Caco-2 (cell line): ENCODE measurements at regions of chr3 and their contacts with region 1.

Region 1: DNA sequence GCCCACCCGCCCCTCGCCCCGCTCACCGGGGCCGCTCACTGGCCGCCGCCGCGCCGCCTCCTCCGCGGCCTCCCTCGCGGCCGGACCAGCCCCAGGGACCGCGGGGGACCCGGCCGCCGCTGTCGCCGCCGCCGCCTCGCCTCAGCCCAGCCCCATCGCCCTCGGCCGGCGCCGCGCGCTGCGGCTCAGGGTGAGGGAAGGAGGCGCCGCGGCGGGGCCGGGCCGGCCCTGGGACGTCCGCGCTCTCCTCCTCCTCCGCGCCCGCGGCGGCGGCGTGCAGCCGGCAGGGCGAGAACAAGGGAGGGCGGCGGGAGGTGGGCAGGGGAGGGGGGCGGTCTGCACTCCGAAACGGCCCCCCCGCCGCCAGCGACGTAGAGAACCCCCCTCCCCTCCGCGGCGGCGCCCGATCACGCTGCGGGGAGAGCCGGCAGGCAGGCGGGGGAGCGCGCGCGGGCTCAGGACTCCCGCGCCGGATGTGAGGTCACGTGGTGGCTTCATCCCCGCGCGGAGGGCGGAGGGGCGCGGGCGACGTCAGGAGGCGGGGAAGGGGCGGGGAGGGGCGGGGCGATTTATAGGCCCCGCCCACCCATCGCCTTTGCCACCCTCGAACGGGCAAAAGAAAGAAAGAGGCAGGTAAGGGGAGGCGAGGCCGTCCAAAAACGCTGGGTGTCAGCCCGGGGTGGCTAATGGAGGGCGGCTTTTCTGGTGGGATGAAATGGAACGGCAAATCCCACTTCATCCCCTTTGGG is at the start of gene ATP13A3:
- DNase-seq: peak; percentile 88 to 91
- H3K4me3 ChIP-seq: peak within 1 kb of the TSS; percentile 70
- H3K4me3 Mint-ChIP-seq: peak within 1 kb of the TSS; percentile 70
- H3K27ac Mint-ChIP-seq: peak within 1 kb of the TSS; percentile 77
- H3K4me1 ChIP-seq: peaks cover 37% of the 10 kb centered on the region
- H3K4me1 Mint-ChIP-seq: peaks cover 33% of the 10 kb centered on the region
- H3K27me3 ChIP-seq: no peaks in the 10 kb centered on the region
- H3K27me3 Mint-ChIP-seq: no peaks in the 10 kb centered on the region
- CTCF ChIP-seq: no peak
- total RNA-seq, gene ATP13A3: 181 and 183 TPM in 2 replicates

Region 2: GRCh38 chr3:194512895-194513601 is 26.3 kb after region 1 on chr3:
- CTCF ChIA-PET with region 1: no interaction called
- POLR2A ChIA-PET with region 1: no interaction called
- intact Hi-C with region 1: loop called (anchors 2 kb)
- DNase-seq: peak; percentile 84 to 85
- H3K4me3 ChIP-seq: no peak overlapping the region
- H3K4me3 Mint-ChIP-seq: no peak overlapping the region
- H3K27ac Mint-ChIP-seq: no peak overlapping the region
- H3K4me1 ChIP-seq: peaks cover 32% of the 10 kb centered on the region
- H3K4me1 Mint-ChIP-seq: peaks cover 21% of the 10 kb centered on the region
- H3K27me3 ChIP-seq: no peaks in the 10 kb centered on the region
- H3K27me3 Mint-ChIP-seq: no peaks in the 10 kb centered on the region
- CTCF ChIP-seq: no peak

Region 3: DNA sequence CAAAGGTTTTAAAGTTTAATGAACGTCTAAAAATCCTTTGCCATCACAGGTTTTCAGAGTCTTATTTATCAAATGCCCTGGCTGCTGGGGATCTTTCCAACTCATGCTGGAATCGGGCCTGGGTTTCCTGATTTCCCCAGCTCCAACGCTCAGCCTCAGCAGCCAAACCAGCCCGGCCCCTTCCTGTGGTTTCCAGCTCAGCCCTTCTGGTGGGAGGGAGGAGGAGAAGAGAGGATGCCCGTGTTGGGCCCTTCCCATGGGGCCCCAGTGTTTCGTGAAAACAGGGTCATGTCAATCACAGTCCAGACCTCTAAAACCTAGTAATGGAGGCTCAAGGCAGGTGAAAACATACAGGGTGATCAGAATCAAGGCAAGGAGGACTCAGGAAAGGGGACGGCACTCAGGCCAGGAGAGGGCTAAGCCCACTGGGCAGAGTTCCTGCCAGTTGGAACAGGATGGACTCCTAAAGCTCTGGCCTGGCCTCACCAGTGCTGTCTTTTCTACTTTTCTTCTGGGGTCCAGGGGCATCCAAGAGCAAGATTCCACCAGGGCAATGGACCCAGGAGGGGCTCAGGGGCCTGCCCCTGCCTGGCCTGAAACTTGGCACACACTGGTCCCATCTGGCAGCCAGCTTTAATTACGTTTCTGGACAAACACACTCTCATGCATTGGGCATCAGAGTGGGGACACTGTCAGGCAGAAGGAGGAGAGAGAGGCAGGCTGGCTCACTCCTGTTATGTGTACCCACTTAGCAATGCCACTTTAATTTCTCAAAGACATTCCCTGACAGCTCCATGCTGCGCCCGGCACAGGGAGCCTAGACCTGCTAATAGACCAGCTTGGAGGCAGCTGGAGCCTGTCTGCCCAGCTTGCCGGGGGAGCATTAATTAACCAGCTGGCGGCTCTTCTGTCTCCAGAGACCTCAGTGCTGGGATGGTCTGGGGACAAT is 393.6 kb after region 1 on chr3:
- CTCF ChIA-PET with region 1: no interaction called
- POLR2A ChIA-PET with region 1: no interaction called
- intact Hi-C with region 1: no loop called
- DNase-seq: no peak
- H3K4me3 ChIP-seq: no peak overlapping the region
- H3K4me3 Mint-ChIP-seq: no peak overlapping the region
- H3K27ac Mint-ChIP-seq: no peak overlapping the region
- H3K4me1 ChIP-seq: peaks cover 4% of the 10 kb centered on the region; the same call in 1 of the 2 replicates
- H3K4me1 Mint-ChIP-seq: no peaks in the 10 kb centered on the region
- H3K27me3 ChIP-seq: no peaks in the 10 kb centered on the region
- H3K27me3 Mint-ChIP-seq: no peaks in the 10 kb centered on the region
- CTCF ChIP-seq: no peak

Region 4: DNA sequence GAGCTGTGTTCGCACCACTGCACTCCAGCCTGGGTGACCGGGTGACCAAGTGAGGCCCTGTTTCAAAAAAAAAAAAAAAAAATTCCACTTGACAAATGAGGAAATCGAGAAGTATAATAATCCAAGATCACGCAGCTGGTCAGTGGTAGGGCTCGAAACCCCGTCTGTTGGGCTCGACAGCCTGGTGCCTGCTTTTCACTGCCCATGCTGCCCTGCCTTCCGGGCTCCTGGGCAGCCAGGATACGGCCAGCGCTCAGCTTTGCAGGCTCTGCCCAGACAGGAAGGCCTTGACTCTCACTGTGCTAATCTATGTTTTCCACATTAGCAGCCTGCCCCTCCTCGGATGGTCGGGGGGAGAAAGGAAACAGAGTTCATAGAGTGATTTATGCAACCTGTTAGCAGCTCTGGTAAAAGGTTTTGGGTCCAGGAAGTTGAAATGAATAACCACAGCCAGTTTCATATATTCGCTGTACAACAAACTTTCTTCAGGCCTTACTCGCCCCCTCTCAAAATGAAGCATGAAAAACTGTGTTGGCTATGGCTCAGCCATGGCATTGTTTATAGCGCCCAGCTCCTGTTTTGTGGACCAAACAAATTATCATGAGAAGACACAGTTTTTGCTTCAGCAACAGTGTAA is 675.4 kb after region 1 on chr3:
- CTCF ChIA-PET with region 1: no interaction called
- POLR2A ChIA-PET with region 1: interaction called, 10 read pairs
- intact Hi-C with region 1: no loop called
- DNase-seq: no peak
- H3K4me3 ChIP-seq: no peak overlapping the region
- H3K4me3 Mint-ChIP-seq: no peak overlapping the region
- H3K27ac Mint-ChIP-seq: no peak overlapping the region
- H3K4me1 ChIP-seq: peaks cover 38% of the 10 kb centered on the region
- H3K4me1 Mint-ChIP-seq: peaks cover 48% of the 10 kb centered on the region
- H3K27me3 ChIP-seq: no peaks in the 10 kb centered on the region
- H3K27me3 Mint-ChIP-seq: no peaks in the 10 kb centered on the region
- CTCF ChIP-seq: no peak

Region 5: DNA sequence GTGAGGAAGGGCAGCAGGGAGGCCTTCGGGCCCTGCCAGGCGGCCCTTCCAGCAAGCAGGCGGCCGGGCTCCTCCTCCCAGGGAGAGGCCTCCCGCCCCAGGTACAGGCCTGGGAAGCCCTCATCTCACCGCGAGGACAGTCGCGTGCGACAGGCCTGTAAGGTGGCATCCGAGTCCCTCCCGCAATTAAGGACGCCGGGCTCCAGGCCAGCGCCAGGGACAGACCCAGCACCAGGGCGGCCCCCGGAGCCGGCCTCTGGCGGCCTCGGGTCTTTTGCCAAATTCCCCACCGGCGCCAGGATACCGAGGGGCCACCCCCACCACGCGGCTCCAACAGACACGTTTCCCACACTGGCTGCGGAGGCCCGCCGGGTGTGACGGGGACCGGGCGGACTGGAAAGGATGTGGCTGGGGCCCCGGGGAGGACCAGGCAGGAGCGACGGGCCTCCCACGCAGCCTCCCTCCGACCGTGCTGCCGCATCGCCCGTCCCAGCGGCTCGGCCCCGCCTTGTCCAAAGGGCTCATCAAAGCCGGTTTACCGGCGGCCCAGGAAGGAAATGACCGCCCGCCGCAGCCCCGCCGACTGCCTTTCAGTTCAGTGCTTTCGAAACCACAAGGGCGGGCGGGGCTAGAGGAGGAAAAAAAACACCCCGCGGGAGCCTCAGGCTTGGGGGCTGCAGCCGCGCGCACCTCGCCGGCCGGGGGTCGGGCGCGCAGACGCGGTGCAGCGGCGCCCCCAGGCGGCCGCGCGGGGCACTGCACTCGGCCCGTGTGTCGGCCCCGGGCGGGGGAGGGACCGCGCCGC is 773.0 kb after region 1 on chr3:
- CTCF ChIA-PET with region 1: no interaction called
- POLR2A ChIA-PET with region 1: no interaction called
- intact Hi-C with region 1: no loop called
- DNase-seq: peak; percentile 94
- H3K4me3 ChIP-seq: peak overlapping the region; percentile 83
- H3K4me3 Mint-ChIP-seq: peak overlapping the region; percentile 70
- H3K27ac Mint-ChIP-seq: peak overlapping the region; percentile 69
- H3K4me1 ChIP-seq: peaks cover 9% of the 10 kb centered on the region; the same call in 1 of the 2 replicates
- H3K4me1 Mint-ChIP-seq: peaks cover 6% of the 10 kb centered on the region
- H3K27me3 ChIP-seq: no peaks in the 10 kb centered on the region
- H3K27me3 Mint-ChIP-seq: no peaks in the 10 kb centered on the region
- CTCF ChIP-seq: peak; percentile 18 to 73